ENCODE measurements at regions of chr2 and their contacts with region 1.

Region 1: GRCh38 chr2:12326449-12327190 is 390.1 kb upstream of the TRIB2 start:
- DNase-seq: no peak
- ATAC-seq: no peak
- H3K4me3 Mint-ChIP-seq: no peak overlapping the region
- H3K27ac Mint-ChIP-seq: no peak overlapping the region
- H3K4me1 Mint-ChIP-seq: peaks cover 26% of the 10 kb centered on the region
- H3K27me3 Mint-ChIP-seq: no peaks in the 10 kb centered on the region
- CTCF ChIP-seq: no peak

Region 2: GRCh38 chr2:11955314-11955713 is 371.3 kb before region 1 on chr2:
- CTCF ChIA-PET with region 1: no interaction called
- POLR2A ChIA-PET with region 1: no interaction called
- intact Hi-C with region 1: loop called (anchors 5 kb)
- DNase-seq: no peak
- ATAC-seq: no peak
- H3K4me3 Mint-ChIP-seq: no peak overlapping the region
- H3K27ac Mint-ChIP-seq: no peak overlapping the region
- H3K4me1 Mint-ChIP-seq: peaks cover 7% of the 10 kb centered on the region
- H3K27me3 Mint-ChIP-seq: peaks cover 2% of the 10 kb centered on the region
- CTCF ChIP-seq: no peak

Region 3: DNA sequence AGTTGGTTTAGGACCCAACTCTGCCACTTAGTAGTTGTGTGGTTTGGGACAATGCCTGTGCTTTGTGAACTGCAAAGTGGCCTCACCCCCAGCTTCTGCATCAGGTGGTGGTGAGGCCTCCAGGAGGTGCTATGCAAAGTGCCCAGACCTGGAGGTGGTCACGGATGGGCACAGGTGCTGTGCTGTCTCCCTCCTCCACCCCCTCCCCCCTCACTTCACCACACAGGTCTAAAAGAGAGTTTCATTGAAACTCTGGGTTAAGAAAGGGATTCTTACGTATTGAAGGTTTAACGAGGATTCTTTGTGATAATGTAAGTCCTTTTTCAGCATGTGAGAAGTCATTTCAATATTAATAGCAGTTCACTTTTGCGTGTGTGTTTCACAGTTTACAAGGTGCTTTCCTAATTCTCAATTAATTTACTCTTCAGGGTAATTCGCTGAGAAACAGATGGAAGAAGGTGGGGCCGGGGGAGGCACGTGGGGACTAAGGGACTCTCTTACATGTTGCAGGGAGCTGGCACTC is 210.3 kb before region 1 on chr2:
- CTCF ChIA-PET with region 1: no interaction called
- POLR2A ChIA-PET with region 1: no interaction called
- intact Hi-C with region 1: loop called (anchors 5 kb)
- DNase-seq: no peak
- ATAC-seq: peak; percentile 73
- H3K4me3 Mint-ChIP-seq: peak overlapping the region; percentile 51
- H3K27ac Mint-ChIP-seq: peak overlapping the region; percentile 78
- H3K4me1 Mint-ChIP-seq: peaks cover 63% of the 10 kb centered on the region
- H3K27me3 Mint-ChIP-seq: no peaks in the 10 kb centered on the region
- CTCF ChIP-seq: no peak

Measured in activated B cell treated with CpG ODN at 0.5 μM for 24 hours (primary cell).